ENCODE measurements at regions of chr4 and their contacts with region 1.

Region 1: DNA sequence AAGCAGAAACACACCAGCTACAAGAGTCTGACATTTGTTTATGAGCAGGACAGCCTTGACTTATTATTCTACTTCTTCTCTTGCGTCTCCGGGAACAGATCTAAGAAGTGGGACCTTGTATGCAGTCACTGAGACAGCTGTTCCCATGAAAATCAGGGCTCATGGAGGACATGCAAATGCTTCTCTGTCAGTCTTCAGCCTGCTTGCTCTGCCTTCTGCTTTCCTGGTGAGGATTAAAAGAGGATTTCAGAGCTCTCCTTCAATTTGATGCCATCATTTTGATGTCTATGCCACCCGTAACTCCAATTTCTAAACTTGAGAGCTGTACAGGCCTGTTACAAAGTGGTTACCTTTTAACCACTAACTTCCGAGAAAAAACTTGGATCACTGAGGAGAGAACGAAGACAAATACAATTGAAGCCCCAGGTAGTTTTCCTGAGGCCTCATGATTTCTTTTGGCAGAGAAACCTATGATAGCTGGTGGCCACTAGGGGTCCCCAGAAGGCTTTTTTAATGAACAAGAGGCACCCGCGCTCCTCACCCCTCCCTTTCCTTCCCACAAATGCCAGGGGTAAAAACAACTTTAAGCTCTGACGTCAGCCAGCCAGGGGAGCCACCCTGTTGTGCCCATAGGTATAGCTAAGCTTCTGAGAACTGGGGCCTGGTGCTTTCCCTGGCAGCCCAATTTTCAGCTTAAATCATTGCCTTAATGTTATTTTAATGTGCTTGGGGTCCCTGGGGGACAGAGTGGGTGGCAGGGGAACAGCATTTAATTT is 97.0 kb downstream of the DDIT4L start:
- DNase-seq: peak; percentile 68 to 97 (median 86)
- ATAC-seq: peak; percentile 99
- H3K4me3 ChIP-seq: no peak overlapping the region
- H3K4me3 Mint-ChIP-seq: no peak overlapping the region
- H3K27ac ChIP-seq: peak overlapping the region in 1 of 2 experiments; percentile 59
- H3K27ac Mint-ChIP-seq: peak overlapping the region; percentile 91
- H3K4me1 ChIP-seq: peaks cover 7% of the 10 kb centered on the region
- H3K4me1 Mint-ChIP-seq: peaks cover 18% of the 10 kb centered on the region
- H3K27me3 ChIP-seq: no peaks in the 10 kb centered on the region
- H3K27me3 Mint-ChIP-seq: no peaks in the 10 kb centered on the region
- CTCF ChIP-seq: peak; percentile 71

Region 2: DNA sequence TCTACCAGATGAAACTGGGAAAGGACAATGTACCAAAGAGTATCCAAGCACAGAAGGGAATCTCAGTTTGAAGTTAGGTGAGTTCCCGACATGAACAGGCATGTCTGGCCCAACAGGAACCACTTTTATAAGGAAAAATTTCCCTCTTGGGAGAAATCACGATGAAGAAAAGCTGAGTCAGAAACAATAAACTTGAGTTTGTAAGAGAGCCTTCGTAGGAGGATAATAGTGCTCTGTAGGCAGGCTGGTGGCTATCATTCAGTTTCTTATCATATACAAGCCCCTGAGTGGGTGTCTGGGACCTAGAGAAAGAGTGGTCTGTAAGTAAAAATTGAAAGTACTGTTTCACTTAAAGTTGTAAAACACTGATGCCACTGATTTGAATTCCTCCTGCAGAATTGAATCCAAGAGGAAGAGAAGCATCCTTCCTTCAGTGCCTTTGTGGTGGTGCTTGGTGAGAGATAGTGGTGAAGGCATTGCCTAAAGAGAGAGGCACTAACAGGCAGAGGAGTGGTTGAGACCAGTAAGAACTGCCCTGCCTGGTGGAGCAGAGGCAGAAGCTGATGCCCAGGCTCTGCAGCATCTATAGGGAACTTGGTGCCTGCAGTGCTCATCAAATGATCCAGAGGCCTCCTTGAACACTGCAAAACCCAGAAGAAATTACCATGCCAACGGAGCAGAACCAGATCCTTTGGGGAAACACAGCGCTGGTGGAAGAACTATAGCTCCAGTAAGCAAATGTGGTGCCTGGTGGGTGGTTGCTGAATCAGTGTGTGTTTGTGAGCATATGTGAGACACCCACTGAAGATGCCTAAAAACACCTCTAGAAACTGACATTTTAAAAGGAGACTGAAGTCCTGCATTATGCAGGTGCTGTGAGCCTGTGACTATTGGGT is 1129.5 kb before region 1 on chr4:
- CTCF ChIA-PET with region 1: no interaction called
- POLR2A ChIA-PET with region 1: no interaction called
- intact Hi-C with region 1: no loop called
- DNase-seq: no peak
- ATAC-seq: no peak
- H3K4me3 ChIP-seq: no peak overlapping the region
- H3K4me3 Mint-ChIP-seq: no peak overlapping the region
- H3K27ac ChIP-seq: no peak overlapping the region
- H3K27ac Mint-ChIP-seq: no peak overlapping the region
- H3K4me1 ChIP-seq: no peaks in the 10 kb centered on the region
- H3K4me1 Mint-ChIP-seq: no peaks in the 10 kb centered on the region
- H3K27me3 ChIP-seq: no peaks in the 10 kb centered on the region
- H3K27me3 Mint-ChIP-seq: peaks cover 3% of the 10 kb centered on the region
- CTCF ChIP-seq: no peak

Region 3: DNA sequence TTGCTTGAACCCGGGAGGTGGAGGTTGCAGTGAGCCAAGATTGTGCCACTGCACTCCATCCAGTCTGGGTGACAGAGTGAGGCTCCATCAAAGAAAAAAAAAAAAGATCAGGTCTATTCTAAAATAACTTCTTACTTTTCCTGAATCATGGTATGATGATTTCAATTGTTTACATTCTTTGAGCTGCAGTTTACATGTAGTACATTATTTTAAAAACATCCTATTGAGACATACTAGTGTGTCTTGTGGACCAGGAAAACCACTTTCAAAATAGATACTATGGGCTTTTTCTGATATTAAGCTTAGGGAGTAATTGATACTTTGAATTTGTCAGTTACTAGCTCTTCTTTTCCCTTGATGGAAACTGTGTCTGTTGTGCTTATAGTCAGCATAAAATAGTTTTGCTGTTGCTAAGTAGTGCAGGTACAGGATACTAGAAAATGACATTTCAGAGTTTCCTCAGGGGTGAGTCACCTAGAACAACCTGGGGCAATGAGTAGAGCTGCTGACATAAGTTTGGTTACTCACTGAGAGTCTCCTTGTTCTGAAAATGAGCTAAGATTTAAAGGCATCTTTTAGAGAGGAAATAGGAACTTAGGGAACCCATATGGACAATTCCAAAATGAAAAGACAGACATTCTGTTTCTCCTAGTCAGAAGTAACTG is 382.5 kb before region 1 on chr4:
- CTCF ChIA-PET with region 1: no interaction called
- POLR2A ChIA-PET with region 1: no interaction called
- intact Hi-C with region 1: no loop called
- DNase-seq: no peak
- ATAC-seq: no peak
- H3K4me3 ChIP-seq: no peak overlapping the region
- H3K4me3 Mint-ChIP-seq: no peak overlapping the region
- H3K27ac ChIP-seq: no peak overlapping the region
- H3K27ac Mint-ChIP-seq: no peak overlapping the region
- H3K4me1 ChIP-seq: no peaks in the 10 kb centered on the region
- H3K4me1 Mint-ChIP-seq: no peaks in the 10 kb centered on the region
- H3K27me3 ChIP-seq: peaks cover 0 to 2% of the 10 kb centered on the region in 2 experiments
- H3K27me3 Mint-ChIP-seq: peaks cover 7% of the 10 kb centered on the region
- CTCF ChIP-seq: no peak

Region 4: GRCh38 chr4:99949034-99949998 is 144.0 kb before region 1 on chr4:
- CTCF ChIA-PET with region 1: interaction called, 3 read pairs
- POLR2A ChIA-PET with region 1: interaction called, 4 read pairs
- intact Hi-C with region 1: loop called in 1 of 2 experiments (anchors 2 kb)
- DNase-seq: peak; percentile 67 to 95 (median 88)
- ATAC-seq: peak; percentile 32
- H3K4me3 ChIP-seq: peak overlapping the region; percentile 89 to 97
- H3K4me3 Mint-ChIP-seq: no peak overlapping the region
- H3K27ac ChIP-seq: peak overlapping the region; percentile 85 to 97
- H3K27ac Mint-ChIP-seq: no peak overlapping the region
- H3K4me1 ChIP-seq: peaks cover 37% of the 10 kb centered on the region
- H3K4me1 Mint-ChIP-seq: peaks cover 35% of the 10 kb centered on the region
- H3K27me3 ChIP-seq: no peaks in the 10 kb centered on the region
- H3K27me3 Mint-ChIP-seq: no peaks in the 10 kb centered on the region
- CTCF ChIP-seq: peak; percentile 58

Region 5: GRCh38 chr4:100106982-100107381 is 13.7 kb after region 1 on chr4:
- CTCF ChIA-PET with region 1: interaction called, 72 read pairs
- POLR2A ChIA-PET with region 1: interaction called, 7 read pairs
- intact Hi-C with region 1: no loop called
- DNase-seq: peak in 6 of 9 experiments; percentile 9 to 75 (median 22)
- ATAC-seq: peak; percentile 84
- H3K4me3 ChIP-seq: no peak overlapping the region
- H3K4me3 Mint-ChIP-seq: no peak overlapping the region
- H3K27ac ChIP-seq: peak overlapping the region in 1 of 2 experiments; percentile 24
- H3K27ac Mint-ChIP-seq: peak overlapping the region; percentile 6
- H3K4me1 ChIP-seq: peaks cover 12% of the 10 kb centered on the region
- H3K4me1 Mint-ChIP-seq: peaks cover 17% of the 10 kb centered on the region
- H3K27me3 ChIP-seq: no peaks in the 10 kb centered on the region
- H3K27me3 Mint-ChIP-seq: no peaks in the 10 kb centered on the region
- CTCF ChIP-seq: no peak

Region 6: DNA sequence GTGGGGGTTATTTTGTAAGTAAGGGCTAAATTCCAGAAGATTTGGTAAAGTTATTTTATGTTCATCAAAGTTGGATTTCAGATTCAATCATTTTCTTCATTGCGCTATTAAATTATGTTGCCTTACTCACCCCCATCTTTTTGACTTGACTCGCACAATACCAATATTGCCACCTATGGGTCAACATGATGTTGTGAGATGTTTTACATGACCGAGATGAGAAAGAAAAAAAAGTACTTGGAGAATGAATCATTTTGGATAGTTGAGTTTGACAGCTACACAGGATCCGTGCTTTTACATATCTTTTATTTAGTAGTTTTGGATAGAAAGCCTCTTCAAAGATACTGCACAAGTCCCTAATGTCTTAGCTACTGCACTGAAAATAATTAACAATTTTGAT is 648.8 kb after region 1 on chr4:
- CTCF ChIA-PET with region 1: no interaction called
- POLR2A ChIA-PET with region 1: no interaction called
- intact Hi-C with region 1: loop called in 1 of 2 experiments (anchors 5 kb)
- DNase-seq: peak in 2 of 9 experiments; percentile 4 to 22
- ATAC-seq: no peak
- H3K4me3 ChIP-seq: no peak overlapping the region
- H3K4me3 Mint-ChIP-seq: no peak overlapping the region
- H3K27ac ChIP-seq: no peak overlapping the region
- H3K27ac Mint-ChIP-seq: no peak overlapping the region
- H3K4me1 ChIP-seq: no peaks in the 10 kb centered on the region
- H3K4me1 Mint-ChIP-seq: no peaks in the 10 kb centered on the region
- H3K27me3 ChIP-seq: no peaks in the 10 kb centered on the region
- H3K27me3 Mint-ChIP-seq: no peaks in the 10 kb centered on the region
- CTCF ChIP-seq: no peak

Region 7: DNA sequence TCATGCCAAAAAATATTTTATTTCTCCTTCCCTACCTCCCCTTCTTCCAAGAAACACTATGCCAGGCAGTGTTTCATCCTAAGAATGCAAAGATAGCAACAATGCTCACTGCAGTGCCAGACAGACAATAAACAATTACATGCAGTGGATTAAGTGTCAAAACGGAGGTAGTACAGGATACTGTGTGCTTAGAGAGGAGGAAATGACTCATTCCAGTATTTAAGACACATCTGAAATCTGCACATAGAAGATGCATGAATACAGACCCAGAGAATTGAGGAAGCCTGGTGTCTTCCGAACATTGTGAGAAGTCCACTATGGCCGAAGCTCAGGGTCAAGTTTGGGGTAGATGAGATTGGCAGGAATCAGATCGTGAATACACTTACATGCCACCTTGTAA is 927.7 kb after region 1 on chr4:
- CTCF ChIA-PET with region 1: no interaction called
- POLR2A ChIA-PET with region 1: interaction called, 3 read pairs
- intact Hi-C with region 1: loop called (anchors 5 to 10 kb)
- DNase-seq: peak in 2 of 9 experiments; percentile 59 to 73
- ATAC-seq: peak; percentile 72
- H3K4me3 ChIP-seq: no peak overlapping the region
- H3K4me3 Mint-ChIP-seq: peak overlapping the region; percentile 47
- H3K27ac ChIP-seq: peak overlapping the region; percentile 15 to 56
- H3K27ac Mint-ChIP-seq: peak overlapping the region; percentile 90
- H3K4me1 ChIP-seq: peaks cover 29% of the 10 kb centered on the region
- H3K4me1 Mint-ChIP-seq: peaks cover 35% of the 10 kb centered on the region
- H3K27me3 ChIP-seq: no peaks in the 10 kb centered on the region
- H3K27me3 Mint-ChIP-seq: no peaks in the 10 kb centered on the region
- CTCF ChIP-seq: no peak

Region 8: DNA sequence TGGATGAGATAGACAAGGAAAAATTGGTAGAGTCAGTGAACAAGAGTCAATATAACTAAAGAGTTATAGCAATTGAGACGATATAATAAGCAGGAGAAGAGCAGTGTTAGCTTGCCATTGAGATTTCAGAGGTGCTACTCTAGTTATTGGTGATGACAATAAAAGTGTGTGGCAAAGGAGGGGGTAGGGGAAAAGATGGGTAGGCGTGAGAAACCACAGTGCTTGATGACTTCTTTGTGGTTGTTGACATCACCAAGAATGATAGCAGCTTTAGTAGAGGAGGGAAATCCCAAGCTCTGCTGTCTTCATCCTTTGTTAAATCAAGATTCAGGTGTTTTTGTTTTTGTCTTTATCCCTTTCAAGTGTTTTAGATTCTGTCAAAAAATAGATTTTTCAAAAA is 1433.9 kb after region 1 on chr4:
- CTCF ChIA-PET with region 1: no interaction called
- POLR2A ChIA-PET with region 1: no interaction called
- intact Hi-C with region 1: loop called (anchors 10 kb)
- DNase-seq: peak in 8 of 9 experiments; percentile 19 to 93 (median 54)
- ATAC-seq: peak; percentile 93
- H3K4me3 ChIP-seq: no peak overlapping the region
- H3K4me3 Mint-ChIP-seq: no peak overlapping the region
- H3K27ac ChIP-seq: no peak overlapping the region
- H3K27ac Mint-ChIP-seq: peak overlapping the region; percentile 28
- H3K4me1 ChIP-seq: peaks cover 16% of the 10 kb centered on the region
- H3K4me1 Mint-ChIP-seq: peaks cover 16% of the 10 kb centered on the region
- H3K27me3 ChIP-seq: peaks cover 0 to 7% of the 10 kb centered on the region in 2 experiments
- H3K27me3 Mint-ChIP-seq: peaks cover 29% of the 10 kb centered on the region
- CTCF ChIP-seq: no peak

Region 9: GRCh38 chr4:101730291-101731117 is 1637.2 kb after region 1 on chr4:
- CTCF ChIA-PET with region 1: interaction called, 18 read pairs
- POLR2A ChIA-PET with region 1: no interaction called
- intact Hi-C with region 1: loop called (anchors 1 to 2 kb)
- DNase-seq: peak in 7 of 9 experiments; percentile 24 to 69 (median 48)
- ATAC-seq: peak; percentile 67
- H3K4me3 ChIP-seq: no peak overlapping the region
- H3K4me3 Mint-ChIP-seq: no peak overlapping the region
- H3K27ac ChIP-seq: no peak overlapping the region
- H3K27ac Mint-ChIP-seq: no peak overlapping the region
- H3K4me1 ChIP-seq: no peaks in the 10 kb centered on the region
- H3K4me1 Mint-ChIP-seq: no peaks in the 10 kb centered on the region
- H3K27me3 ChIP-seq: no peaks in the 10 kb centered on the region
- H3K27me3 Mint-ChIP-seq: peaks cover 5% of the 10 kb centered on the region
- CTCF ChIP-seq: peak; percentile 65

Measured in CD8-positive, alpha-beta T cell (primary cell).